IMR-90 (cell line): ENCODE measurements at regions of chr4 and their contacts with region 1.

Region 1: DNA sequence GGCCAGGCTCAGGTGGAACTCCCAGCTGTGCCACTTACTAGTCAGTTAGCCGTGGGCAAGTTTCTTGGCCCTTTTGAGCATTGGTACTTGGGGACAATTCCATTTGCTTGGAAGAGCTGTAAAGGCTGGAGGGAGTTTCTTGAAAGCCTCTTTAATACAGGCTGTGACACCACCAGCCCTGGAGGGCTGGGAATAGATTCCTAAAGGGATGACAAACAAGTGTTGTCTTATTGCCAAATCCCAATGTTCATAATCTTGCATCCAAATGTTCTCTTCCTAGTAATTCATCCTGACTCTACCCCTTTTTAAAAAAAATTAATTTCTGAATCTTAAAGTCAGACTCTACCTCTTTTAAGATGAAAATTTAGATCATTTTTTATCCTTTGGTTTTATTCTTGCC is 14.6 kb upstream of the MED28 start:
- DNase-seq: no peak
- ATAC-seq: no peak
- H3K4me3 ChIP-seq: no peak overlapping the region
- H3K27ac ChIP-seq: no peak overlapping the region
- H3K4me1 ChIP-seq: no peaks in the 10 kb centered on the region
- H3K27me3 ChIP-seq: no peaks in the 10 kb centered on the region
- CTCF ChIP-seq: no peak
- POLR2A ChIP-seq: no peak
- RAD21 ChIP-seq: no peak

Region 2: GRCh38 chr4:16140520-16141249 is 1459.1 kb before region 1 on chr4:
- CTCF ChIA-PET with region 1: no interaction called
- POLR2A ChIA-PET with region 1: interaction called, 18 read pairs
- dilution Hi-C with region 1: no loop called
- in situ Hi-C with region 1: no loop called
- intact Hi-C with region 1: no loop called
- DNase-seq: peak; percentile 68
- ATAC-seq: peak; percentile 73
- H3K4me3 ChIP-seq: no peak overlapping the region
- H3K27ac ChIP-seq: no peak overlapping the region
- H3K4me1 ChIP-seq: peaks cover 2% of the 10 kb centered on the region; the same call in 1 of the 2 replicates
- H3K27me3 ChIP-seq: peaks cover 17% of the 10 kb centered on the region
- CTCF ChIP-seq: no peak
- POLR2A ChIP-seq: no peak
- RAD21 ChIP-seq: no peak

Region 3: DNA sequence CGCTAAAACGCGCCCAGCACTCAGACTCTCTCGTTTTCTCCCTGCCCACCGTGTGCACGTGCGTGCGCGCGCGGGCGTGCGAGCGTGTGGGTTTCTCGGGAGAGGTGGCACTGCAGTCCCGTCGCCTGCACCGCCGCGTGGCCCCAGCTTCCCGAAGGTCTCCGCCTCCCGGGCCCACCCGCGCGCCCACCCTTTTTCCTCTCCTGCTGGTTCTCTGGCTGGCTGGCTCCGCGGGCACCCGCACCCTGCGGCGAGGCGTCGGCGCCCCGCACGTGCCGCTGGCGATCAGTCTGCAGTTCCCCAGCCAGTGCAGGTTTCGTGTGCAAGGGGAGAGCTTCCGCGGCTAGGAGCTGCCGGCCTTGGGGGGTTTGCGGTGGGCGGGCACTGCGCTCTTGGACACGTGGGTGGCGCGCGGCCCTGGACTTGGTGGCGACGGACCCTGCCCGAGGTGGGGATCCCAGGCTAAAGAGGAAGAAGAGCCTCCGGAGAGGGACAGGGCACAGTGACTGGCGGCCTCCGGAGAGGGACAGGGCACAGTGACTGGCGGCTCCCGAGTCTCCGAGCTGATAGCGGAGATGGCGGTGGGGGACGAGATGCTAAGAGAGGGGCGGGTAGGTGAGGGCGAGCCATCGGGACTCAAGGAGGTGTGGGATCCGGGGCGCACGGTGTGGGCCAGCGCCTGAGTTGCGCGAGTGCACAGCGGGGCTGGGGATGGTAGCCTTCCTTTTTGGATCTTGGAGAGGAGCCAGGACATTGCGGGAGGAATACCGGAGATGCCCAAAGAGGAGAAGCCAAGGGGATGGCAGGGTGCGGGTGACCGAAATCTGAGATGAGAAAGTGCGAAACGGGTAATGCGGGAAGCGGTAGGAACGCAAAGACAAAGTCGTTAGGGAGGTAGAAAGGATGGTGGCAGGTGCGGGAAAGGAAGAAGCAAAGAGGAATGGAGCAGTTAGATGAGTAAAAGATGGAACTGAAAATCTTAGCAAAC is 181.8 kb after region 1 on chr4 and contains the start of gene FAM184B:
- CTCF ChIA-PET with region 1: no interaction called
- POLR2A ChIA-PET with region 1: no interaction called
- dilution Hi-C with region 1: no loop called
- in situ Hi-C with region 1: no loop called
- intact Hi-C with region 1: no loop called
- DNase-seq: no peak
- ATAC-seq: peak; percentile 59
- H3K4me3 ChIP-seq: peak within 1 kb of the TSS; percentile 18
- H3K27ac ChIP-seq: no peak within 1 kb of the TSS
- H3K4me1 ChIP-seq: peaks cover 5% of the 10 kb centered on the region; the same call in 1 of the 2 replicates
- H3K27me3 ChIP-seq: peaks cover 24% of the 10 kb centered on the region
- CTCF ChIP-seq: no peak
- POLR2A ChIP-seq: no peak
- RAD21 ChIP-seq: no peak
- total RNA-seq, gene FAM184B: 0.18 and 0.28 TPM in 2 replicates

Region 4: DNA sequence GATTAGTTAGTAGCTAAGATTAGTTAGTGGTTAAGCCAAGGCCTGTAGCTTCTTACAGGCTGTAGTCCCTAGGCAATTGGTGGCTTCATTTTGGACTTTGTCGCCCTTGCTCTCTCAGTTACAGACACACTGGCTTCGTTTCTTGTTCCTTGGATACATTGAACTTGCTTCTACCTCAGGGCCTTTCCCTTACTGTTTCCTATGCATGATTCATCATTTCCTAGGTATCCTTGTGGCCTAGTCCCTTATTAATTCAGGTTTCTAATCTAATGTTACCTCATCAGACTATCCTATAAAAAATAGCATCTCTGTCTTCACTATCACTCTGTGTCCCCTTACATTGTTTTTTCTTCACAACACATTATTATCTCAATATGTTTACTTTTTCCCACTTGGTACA is 467.2 kb after region 1 on chr4:
- CTCF ChIA-PET with region 1: no interaction called
- POLR2A ChIA-PET with region 1: no interaction called
- dilution Hi-C with region 1: no loop called
- in situ Hi-C with region 1: no loop called
- intact Hi-C with region 1: no loop called
- DNase-seq: no peak
- ATAC-seq: no peak
- H3K4me3 ChIP-seq: no peak overlapping the region
- H3K27ac ChIP-seq: no peak overlapping the region
- H3K4me1 ChIP-seq: no peaks in the 10 kb centered on the region
- H3K27me3 ChIP-seq: no peaks in the 10 kb centered on the region
- CTCF ChIP-seq: no peak
- POLR2A ChIP-seq: no peak
- RAD21 ChIP-seq: no peak